PC-9 (cell line): ENCODE measurements at regions of chr11 and their contacts with region 1.

Region 1: DNA sequence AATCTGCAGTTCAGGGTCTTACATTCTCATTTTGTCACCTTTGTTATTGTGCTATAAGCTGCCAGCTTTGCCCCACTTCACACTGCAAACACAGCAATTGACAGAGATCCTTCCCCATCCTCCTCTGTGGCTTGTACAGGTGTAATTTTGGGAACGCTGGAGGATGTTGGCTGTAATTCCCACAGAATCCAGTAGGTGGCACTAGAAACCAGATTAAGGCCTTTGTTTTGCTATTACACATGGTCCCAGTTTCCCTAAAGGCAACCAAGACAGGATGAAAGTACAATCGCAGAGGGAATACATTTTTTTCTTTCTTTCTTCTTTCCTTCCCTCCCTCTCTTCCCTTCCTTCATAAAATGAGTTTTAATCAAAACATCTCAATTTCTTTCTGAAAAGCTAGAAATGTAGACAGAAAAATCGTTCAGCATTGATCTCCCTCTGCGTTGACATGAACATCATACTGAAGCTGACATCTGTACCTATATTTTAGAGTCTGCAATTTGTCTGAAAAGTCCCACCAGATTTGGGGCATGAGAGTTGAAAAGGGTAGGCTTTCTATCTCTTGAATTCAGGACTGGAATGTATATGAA is 21.3 kb upstream of the NELL1 start:
- DNase-seq: peak in 1 of 2 experiments; percentile 34
- H3K4me3 ChIP-seq: no peak overlapping the region
- H3K27ac ChIP-seq: no peak overlapping the region
- H3K4me1 ChIP-seq: no peaks in the 10 kb centered on the region
- H3K27me3 ChIP-seq: peaks cover 29% of the 10 kb centered on the region
- CTCF ChIP-seq: peak; percentile 93

Region 2: DNA sequence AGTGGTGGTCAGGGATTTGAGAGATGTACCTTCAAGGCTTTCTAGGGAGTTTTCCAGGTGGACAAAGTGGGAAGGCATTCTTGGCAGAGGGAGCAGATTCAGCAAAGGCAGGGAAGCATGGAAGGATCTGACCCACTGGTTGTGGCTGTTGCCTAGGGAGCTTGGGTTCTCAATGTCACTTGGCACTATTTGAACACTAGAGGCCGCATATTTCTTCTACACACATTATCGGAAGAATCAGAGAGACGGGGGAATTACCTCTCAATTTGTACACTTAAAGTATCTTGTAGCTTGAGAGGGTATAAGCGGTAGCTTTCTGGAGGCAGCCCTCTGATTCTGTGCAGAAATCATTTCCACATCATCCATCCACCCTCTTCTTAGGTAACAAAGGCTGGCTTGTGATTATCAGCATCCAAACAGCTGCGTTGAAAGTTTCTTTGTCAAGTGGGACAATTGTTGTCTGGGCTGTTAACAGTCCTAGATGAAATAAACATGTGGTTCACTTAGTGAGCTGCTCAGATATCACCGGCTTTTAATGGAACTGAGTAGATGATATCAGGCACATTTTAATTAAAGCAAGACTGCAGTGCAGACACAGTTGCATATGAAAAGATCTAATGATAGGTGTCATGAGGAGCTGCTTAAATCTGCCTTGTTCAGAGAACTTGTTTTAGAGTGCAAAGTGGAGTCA is 23.9 kb after region 1 on chr11:
- CTCF ChIA-PET with region 1: no interaction called
- POLR2A ChIA-PET with region 1: no interaction called
- intact Hi-C with region 1: loop called (anchors 1 kb)
- DNase-seq: no peak
- H3K4me3 ChIP-seq: no peak overlapping the region
- H3K27ac ChIP-seq: no peak overlapping the region
- H3K4me1 ChIP-seq: no peaks in the 10 kb centered on the region
- H3K27me3 ChIP-seq: peaks cover 11% of the 10 kb centered on the region
- CTCF ChIP-seq: no peak

Region 3: GRCh38 chr11:21511835-21512440 is 863.9 kb after region 1 on chr11:
- CTCF ChIA-PET with region 1: no interaction called
- POLR2A ChIA-PET with region 1: no interaction called
- intact Hi-C with region 1: loop called (anchors 2 kb)
- DNase-seq: peak in 1 of 2 experiments; percentile 43
- H3K4me3 ChIP-seq: no peak overlapping the region
- H3K27ac ChIP-seq: no peak overlapping the region
- H3K4me1 ChIP-seq: no peaks in the 10 kb centered on the region
- H3K27me3 ChIP-seq: no peaks in the 10 kb centered on the region
- CTCF ChIP-seq: peak; percentile 68

Region 4: DNA sequence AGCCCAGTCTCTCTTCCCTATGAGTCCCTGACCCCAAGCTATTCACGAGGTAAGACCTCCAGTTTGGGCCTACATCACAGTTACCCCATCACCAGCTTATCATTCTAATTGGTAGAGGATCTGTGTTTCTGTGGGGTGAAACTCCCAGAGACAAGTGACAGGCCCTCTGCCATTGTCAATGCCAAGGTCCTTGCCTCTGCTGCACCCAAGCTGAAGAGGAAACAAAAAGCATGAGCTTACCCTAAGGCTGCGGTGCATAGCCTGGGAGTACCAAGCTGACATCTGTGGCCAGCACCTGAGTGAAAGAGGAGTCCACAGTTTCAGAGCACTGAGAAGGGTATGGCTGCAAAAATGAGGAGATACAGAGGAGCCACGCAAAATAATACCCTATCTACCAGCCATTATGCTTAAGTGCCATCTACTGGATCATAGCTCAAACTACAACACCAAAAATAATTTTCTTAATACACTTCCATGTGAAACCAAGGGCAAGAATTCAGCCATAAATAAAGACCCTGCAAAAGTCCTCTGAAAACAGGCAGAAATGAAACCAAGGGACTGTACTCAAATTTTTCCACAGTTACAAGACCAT is 1482.5 kb after region 1 on chr11:
- CTCF ChIA-PET with region 1: no interaction called
- POLR2A ChIA-PET with region 1: no interaction called
- intact Hi-C with region 1: loop called (anchors 10 kb)
- DNase-seq: no peak
- H3K4me3 ChIP-seq: no peak overlapping the region
- H3K27ac ChIP-seq: no peak overlapping the region
- H3K4me1 ChIP-seq: no peaks in the 10 kb centered on the region
- H3K27me3 ChIP-seq: no peaks in the 10 kb centered on the region
- CTCF ChIP-seq: peak; percentile 60

Region 5: DNA sequence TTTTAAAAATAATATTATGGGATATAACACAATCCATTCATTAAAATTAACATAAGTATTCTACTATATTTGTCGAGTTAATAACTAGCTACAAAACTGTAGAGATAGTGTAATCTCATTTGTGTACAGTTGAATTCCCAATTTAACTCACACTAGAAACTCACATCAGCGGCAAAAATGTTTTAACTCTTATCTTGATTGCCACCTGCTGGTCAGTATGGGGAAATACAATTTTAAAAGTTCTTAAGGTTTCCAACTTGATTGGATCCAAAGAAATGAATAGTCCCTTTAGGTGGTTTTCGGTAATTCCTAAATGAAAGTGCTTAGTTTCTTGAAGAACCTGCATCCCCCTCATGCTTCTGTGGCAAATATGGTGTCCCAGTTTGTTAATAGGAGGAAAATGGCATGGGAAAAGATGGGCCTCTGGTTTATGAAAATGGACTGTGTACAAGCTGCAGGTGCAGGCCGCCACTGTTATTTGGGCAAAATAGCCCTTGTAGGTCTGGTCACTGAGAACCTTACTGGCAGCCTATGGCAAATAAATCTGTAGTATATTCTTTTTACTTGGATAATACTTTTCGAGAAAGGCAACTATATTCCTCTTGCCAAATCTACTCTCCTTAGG is 1656.4 kb after region 1 on chr11:
- CTCF ChIA-PET with region 1: no interaction called
- POLR2A ChIA-PET with region 1: no interaction called
- intact Hi-C with region 1: loop called (anchors 10 kb)
- DNase-seq: no peak
- H3K4me3 ChIP-seq: no peak overlapping the region
- H3K27ac ChIP-seq: no peak overlapping the region
- H3K4me1 ChIP-seq: no peaks in the 10 kb centered on the region
- H3K27me3 ChIP-seq: no peaks in the 10 kb centered on the region
- CTCF ChIP-seq: peak; percentile 82